ENCODE measurements at regions of chr1 and their contacts with region 1.

Region 1: GRCh38 chr1:179002552-179003345 is 22.9 kb upstream of the FAM20B start:
- DNase-seq: peak; percentile 79 to 80
- H3K4me3 ChIP-seq: no peak overlapping the region
- H3K27ac ChIP-seq: peak overlapping the region in 1 of 3 donors; percentile 7
- H3K4me1 ChIP-seq: peaks cover 3 to 9% of the 10 kb centered on the region in 2 donors
- H3K27me3 ChIP-seq: no peaks in the 10 kb centered on the region
- CTCF ChIP-seq: peak; percentile 90 to 99 (median 95)
- POLR2A ChIP-seq: no peak

Region 2: DNA sequence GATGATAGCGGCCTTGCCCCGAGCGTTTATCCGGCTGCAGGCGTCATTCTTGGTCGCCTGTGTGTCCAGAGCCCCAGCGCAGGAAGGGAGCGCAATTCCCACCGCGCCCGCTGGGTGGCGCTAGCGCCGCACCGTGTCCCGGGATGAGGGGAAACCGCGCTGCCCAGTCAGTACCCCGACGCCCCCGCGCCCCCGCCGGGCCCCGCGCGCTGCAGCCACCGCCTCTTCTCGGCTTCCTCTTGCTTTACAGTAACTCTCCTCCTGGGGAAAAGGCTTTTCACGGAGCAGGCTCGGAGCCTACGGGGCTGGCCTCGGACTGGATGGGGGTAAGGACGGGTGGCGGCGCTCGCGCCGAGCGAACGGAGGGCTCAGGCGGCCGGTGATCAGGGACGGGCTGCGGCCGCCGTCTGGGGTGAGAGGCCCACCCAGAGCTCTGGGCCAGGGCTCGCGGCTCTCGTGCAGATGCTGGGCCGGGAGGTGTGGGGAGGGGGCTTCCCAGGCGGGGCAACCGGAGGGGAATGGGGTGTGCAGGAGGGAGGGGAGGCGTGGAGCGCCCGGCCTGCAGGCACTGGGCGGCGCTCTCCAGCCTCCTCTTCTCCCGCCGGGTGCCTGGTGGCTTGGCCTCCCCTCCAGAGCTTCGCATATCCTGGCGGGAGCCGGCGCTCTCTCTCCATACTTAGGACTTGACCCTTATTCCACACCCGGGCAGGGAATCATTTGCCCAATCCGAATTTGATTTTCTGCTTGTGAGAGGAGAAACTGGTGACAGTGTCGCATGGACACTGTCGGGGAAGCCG is 460.0 kb before region 1 on chr1:
- intact Hi-C with region 1: loop called (anchors 5 kb)
- DNase-seq: peak; percentile 87
- H3K4me3 ChIP-seq: peak overlapping the region; percentile 33 to 82 (median 60)
- H3K27ac ChIP-seq: peak overlapping the region; percentile 33 to 80 (median 79)
- H3K4me1 ChIP-seq: peaks cover 5 to 14% of the 10 kb centered on the region in 2 donors
- H3K27me3 ChIP-seq: no peaks in the 10 kb centered on the region
- CTCF ChIP-seq: peak; percentile 88 to 98 (median 96)
- POLR2A ChIP-seq: no peak

Region 3: GRCh38 chr1:178774263-178774662 is 228.5 kb before region 1 on chr1:
- intact Hi-C with region 1: loop called (anchors 5 kb)
- DNase-seq: no peak
- H3K4me3 ChIP-seq: no peak overlapping the region
- H3K27ac ChIP-seq: no peak overlapping the region
- H3K4me1 ChIP-seq: peaks cover 0 to 5% of the 10 kb centered on the region in 2 donors
- H3K27me3 ChIP-seq: no peaks in the 10 kb centered on the region
- CTCF ChIP-seq: peak in 5 of 6 experiments; percentile 29 to 67 (median 51)
- POLR2A ChIP-seq: no peak

Region 4: GRCh38 chr1:178864326-178864725 is 138.4 kb before region 1 on chr1:
- intact Hi-C with region 1: no loop called
- DNase-seq: no peak
- H3K4me3 ChIP-seq: no peak overlapping the region
- H3K27ac ChIP-seq: no peak overlapping the region
- H3K4me1 ChIP-seq: peaks cover 5 to 13% of the 10 kb centered on the region in 2 donors
- H3K27me3 ChIP-seq: no peaks in the 10 kb centered on the region
- CTCF ChIP-seq: no peak
- POLR2A ChIP-seq: no peak